Ascending aorta (tissue), 2 donors: ENCODE measurements at regions of chr17 and their contacts with region 1.

Region 1: DNA sequence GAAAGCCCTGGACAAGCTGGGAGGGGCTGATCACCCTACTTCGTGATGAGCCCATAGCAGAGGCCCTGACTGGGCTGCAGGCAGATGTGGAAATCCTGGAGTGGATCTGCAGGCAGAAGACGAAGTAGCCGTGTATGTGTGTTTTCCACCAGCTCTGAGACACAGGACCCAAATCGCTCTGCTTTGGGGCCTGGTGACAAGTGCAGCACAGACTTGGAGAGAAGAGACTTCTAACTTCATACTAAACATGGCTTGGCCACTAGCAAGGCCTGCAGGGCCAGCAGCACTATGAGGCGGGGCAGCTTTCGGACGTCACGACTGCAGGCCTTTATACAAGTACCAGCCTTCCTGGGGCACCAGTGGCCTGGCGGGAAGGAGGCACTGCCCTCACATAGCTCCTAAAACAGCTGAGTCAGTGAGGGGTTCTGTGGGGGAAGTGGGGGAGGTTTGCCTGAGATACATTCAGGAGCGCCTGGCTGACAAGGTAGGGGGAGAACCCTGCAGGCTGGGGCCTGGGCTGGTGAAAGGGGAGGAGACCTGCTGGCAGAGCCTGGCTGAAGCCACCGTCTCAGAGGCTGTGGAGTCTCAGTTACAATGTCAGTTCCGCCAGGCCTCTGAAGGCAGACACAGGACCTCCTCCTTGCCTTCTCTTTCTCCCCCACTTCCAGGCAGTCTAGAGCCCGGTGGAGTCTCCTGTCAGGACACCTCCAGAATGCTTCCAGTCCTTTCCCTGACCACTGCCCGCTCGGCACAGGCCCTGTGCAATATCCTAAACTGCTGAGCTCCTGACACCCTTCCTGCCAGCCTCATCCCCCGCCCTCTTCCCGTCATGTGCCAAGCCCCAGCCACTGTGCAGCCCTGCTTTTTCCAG is 73.4 kb downstream of the WSB1 start:
- DNase-seq: peak in 1 of 2 donors; percentile 53
- H3K4me3 ChIP-seq: no peak overlapping the region
- H3K27ac ChIP-seq: no peak overlapping the region
- H3K4me1 ChIP-seq: peaks cover 0 to 18% of the 10 kb centered on the region in 2 donors
- H3K27me3 ChIP-seq: no peaks in the 10 kb centered on the region
- CTCF ChIP-seq: no peak

Region 2: DNA sequence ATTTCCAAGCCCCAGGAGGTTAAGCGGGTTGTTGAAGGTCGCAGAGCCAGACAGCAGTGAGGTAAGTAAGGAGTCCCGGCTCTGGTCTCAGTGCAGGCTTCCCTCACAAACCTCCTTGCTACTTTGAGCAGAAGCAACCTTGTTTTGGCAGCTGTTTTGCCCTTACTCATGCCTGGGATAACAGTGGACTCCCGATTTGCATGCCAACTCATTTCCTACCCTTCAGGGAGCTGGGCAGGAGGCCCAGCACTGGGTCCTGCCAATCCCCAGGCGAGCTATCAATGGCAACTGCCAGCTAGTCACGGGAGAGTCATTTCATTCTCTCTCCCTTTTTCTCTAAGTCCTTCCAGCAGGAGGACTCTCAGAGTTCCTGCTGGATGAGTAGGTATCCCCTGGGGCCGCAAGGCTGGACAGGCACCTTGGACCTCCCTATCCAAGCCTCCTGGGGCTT is 16.9 kb after region 1 on chr17:
- intact Hi-C with region 1: loop called (anchors 1 kb)
- DNase-seq: peak; percentile 60 to 92
- H3K4me3 ChIP-seq: no peak overlapping the region
- H3K27ac ChIP-seq: peak overlapping the region; percentile 62 to 72
- H3K4me1 ChIP-seq: peaks cover 6 to 26% of the 10 kb centered on the region in 2 donors
- H3K27me3 ChIP-seq: no peaks in the 10 kb centered on the region
- CTCF ChIP-seq: peak in 1 of 3 experiments; percentile 11